Ovary (tissue), 10 donors: ENCODE measurements at regions of chr12 and their contacts with region 1.

Region 1: GRCh38 chr12:6563448-6564050 is 4.5 kb downstream of the NOP2 start:
- DNase-seq: peak in 3 of 5 donors; percentile 56 to 61 (median 56)
- H3K4me3 ChIP-seq: no peak overlapping the region
- H3K27ac ChIP-seq: no peak overlapping the region
- H3K4me1 ChIP-seq: peaks cover 4% of the 10 kb centered on the region
- H3K27me3 ChIP-seq: no peaks in the 10 kb centered on the region
- CTCF ChIP-seq: peak in 2 of 3 donors; percentile 18 to 58
- EP300 ChIP-seq: no peak
- POLR2A ChIP-seq: no peak

Region 2: GRCh38 chr12:6603095-6603567 is 39.6 kb after region 1 on chr12:
- intact Hi-C with region 1: loop called in 2 of 4 experiments (anchors 5 kb)
- DNase-seq: peak in 1 of 5 donors; percentile 30
- H3K4me3 ChIP-seq: no peak overlapping the region
- H3K27ac ChIP-seq: no peak overlapping the region
- H3K4me1 ChIP-seq: peaks cover 23% of the 10 kb centered on the region
- H3K27me3 ChIP-seq: no peaks in the 10 kb centered on the region
- CTCF ChIP-seq: no peak
- EP300 ChIP-seq: no peak
- POLR2A ChIP-seq: no peak

Region 3: GRCh38 chr12:6647083-6647604 is 83.6 kb after region 1 on chr12 and contains the start of gene ACRBP:
- intact Hi-C with region 1: loop called in 2 of 4 experiments (anchors 10 kb)
- DNase-seq: peak; percentile 71 to 85 (median 78)
- H3K4me3 ChIP-seq: peak within 1 kb of the TSS; percentile 42
- H3K27ac ChIP-seq: no peak within 1 kb of the TSS
- H3K4me1 ChIP-seq: no peaks in the 10 kb centered on the region
- H3K27me3 ChIP-seq: no peaks in the 10 kb centered on the region
- CTCF ChIP-seq: no peak
- EP300 ChIP-seq: no peak
- POLR2A ChIP-seq: no peak
- total RNA-seq, gene ACRBP: 0.30 to 2.5 (median 0.92) TPM

Region 4: GRCh38 chr12:6653987-6654386 is 90.4 kb after region 1 on chr12:
- intact Hi-C with region 1: loop called in 2 of 4 experiments (anchors 10 kb)
- DNase-seq: no peak
- H3K4me3 ChIP-seq: no peak overlapping the region
- H3K27ac ChIP-seq: no peak overlapping the region
- H3K4me1 ChIP-seq: no peaks in the 10 kb centered on the region
- H3K27me3 ChIP-seq: no peaks in the 10 kb centered on the region
- CTCF ChIP-seq: no peak
- EP300 ChIP-seq: no peak
- POLR2A ChIP-seq: no peak

Region 5: DNA sequence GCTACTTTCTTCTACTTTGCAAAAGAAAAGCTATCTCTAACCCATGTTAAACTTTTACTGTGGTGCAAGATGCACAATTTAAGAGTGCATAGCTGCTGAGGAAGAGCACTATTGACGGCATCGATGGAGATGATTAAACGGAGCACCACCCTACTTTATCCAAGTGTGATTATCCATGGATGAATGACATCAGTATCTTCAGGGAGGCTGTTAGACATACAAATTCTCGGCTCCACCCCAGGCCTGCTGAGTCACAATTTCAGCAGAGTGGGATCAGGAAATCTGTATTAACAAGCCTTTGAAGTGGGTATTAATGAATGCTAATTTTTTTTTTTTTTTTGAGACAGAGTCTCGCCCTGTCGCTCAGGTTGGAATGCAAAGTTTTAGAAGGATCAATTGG is 1293.0 kb after region 1 on chr12:
- intact Hi-C with region 1: no loop called
- DNase-seq: no peak
- H3K4me3 ChIP-seq: no peak overlapping the region
- H3K27ac ChIP-seq: no peak overlapping the region
- H3K4me1 ChIP-seq: peaks cover 2% of the 10 kb centered on the region
- H3K27me3 ChIP-seq: no peaks in the 10 kb centered on the region
- CTCF ChIP-seq: no peak
- EP300 ChIP-seq: no peak
- POLR2A ChIP-seq: no peak